ENCODE measurements at regions of chr7 and their contacts with region 1.

Region 1: DNA sequence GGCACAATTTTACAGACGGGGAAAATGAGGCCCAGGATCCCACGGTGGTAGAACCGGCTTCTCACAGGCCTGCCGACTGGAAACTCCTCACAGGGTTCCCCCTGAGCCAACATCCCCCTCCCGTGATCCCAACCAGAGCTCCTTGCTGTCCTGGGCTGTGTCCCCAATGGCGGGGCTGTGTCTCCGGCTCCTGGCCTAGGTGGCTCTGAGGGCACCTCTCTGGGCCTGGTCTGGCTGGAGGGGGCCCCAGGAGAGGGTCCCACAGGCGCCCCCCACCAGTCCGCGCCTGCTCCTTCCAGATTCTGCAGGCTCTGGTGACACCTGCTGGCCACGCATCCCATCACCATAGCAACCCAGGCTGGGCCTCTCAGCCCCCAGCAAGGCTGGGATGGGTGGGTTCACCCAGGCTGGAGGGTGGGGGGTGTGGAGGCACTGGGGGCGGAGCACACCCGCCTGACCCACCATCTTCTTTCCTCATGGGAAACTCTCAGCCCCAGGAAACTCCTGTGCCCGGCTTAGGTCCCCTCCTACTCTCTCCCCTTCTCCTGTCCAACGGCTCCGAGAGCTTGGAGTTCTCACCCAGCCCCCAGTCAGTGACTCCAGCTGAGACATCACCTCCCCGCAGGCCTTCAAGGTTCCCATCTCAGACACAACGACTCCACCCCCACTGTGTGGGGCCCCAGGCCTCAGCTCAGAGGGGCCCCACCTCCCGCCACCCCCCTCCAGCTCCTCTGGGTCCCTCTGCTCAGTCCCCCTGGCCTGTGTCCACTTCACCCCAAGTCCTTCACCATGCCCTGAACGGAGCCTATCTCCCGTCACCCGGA is 27.1 kb upstream of the TNRC18 start:
- DNase-seq: peak; percentile 65

Region 2: DNA sequence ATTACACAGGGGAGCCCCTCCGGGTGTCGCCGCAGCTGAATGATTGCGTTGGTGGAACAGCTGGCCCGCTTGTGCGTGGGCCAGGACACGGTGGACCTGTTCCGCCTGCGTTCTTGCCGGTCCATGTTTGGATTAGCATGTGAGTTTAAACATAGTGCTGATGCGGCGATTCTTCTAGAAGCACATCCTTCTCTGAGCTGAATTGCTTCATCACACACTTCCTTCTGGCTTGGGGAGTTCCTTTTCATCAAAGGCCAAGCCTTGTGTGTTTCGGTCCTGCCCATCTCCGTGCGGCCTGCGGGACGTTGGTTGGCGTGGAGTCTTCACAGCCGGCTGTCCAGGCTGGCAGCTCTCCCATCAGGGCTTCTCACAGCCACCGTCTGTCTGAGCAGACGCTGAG is 213.5 kb before region 1 on chr7:
- CTCF ChIA-PET with region 1: interaction called, 11 read pairs
- POLR2A ChIA-PET with region 1: interaction called, 4 read pairs
- DNase-seq: no peak

Region 3: DNA sequence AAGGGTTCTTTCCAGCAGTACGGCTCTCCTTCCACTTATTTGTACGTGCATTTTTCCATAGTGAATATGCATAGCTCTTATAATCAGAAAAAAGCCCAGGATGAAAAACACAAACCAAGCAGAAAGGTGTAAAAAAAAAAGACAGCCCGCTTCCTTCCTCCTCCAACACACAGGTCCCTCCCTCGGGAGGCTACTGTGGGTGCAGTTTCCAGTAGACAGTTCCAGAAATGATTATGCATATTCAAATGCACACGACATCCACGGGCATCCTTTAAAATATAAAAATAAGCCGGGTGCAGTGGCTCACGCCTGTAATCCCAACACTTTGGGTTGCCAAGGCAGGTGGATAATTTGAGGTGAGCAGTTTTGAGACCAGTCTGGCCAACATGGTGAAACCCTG is 87.0 kb before region 1 on chr7:
- CTCF ChIA-PET with region 1: interaction called, 15 read pairs
- POLR2A ChIA-PET with region 1: no interaction called
- DNase-seq: no peak

Region 4: DNA sequence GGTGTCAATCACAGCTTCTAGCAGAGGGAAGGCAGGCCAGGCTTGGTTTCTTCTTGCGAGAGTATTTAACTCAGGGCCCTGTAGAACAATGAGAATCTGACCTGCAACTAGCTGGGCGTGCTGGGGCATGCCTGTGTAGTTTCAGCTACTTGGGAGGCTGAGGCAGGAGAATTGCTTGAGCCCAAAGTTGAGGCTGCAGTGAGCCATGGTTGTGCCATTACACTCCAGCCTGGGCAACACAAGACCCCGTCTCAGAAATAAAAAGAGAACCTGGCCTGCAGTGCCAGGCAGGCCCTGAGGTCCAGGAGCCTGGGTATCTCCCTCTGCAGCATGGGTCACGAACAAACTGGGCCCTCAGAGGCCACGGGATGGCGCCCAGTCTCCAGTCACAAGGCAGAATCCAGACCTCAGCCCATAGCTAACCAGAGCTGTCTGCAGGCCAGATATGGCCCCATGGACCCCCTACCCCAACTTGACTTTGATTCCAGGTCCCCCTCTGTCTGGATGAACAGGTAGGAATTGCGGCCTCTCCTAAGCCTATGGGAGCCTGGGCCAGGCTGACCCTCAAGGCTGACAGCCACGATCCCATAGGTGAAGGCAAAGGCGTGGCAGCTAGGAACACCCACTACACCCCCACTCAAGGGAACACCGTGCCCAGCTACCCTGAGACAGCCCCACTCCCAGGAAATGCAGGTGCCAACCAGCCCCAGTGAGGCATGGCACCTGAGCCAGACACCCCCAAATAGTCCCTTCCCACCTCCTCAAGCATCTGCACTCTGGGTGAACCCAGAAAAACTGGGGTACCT is 75.5 kb after region 1 on chr7:
- CTCF ChIA-PET with region 1: no interaction called
- POLR2A ChIA-PET with region 1: no interaction called
- DNase-seq: no peak

Region 5: GRCh38 chr7:5827755-5828154 is 377.0 kb after region 1 on chr7:
- CTCF ChIA-PET with region 1: no interaction called
- POLR2A ChIA-PET with region 1: no interaction called
- DNase-seq: no peak

Measured in HEK293T (cell line).